ENCODE measurements at regions of chr4 and their contacts with region 1.

Region 1: DNA sequence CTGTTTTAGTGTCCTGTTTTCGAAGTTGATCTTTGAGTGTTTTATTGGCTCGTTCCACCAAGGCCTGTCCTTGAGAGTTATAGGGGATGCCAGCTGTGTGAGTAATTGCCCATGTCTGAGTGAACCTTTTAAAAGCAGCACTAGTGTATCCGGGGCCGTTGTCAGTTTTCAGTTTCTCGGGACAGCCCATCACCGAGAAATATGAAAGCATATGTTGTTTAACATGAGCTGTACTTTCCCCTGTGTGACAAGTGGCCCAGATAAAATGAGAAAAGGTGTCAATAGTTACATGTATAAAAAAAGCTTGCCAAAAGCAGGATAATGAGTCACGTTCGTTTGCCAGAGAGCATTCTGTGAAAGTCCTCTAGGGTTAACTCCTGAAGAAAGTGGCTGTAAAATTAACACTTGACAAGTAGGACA is 48.6 kb upstream of the RASSF6 start:
- DNase-seq: no peak
- ATAC-seq: no peak
- H3K4me3 ChIP-seq: no peak overlapping the region
- H3K27ac ChIP-seq: peak overlapping the region; percentile 68
- H3K4me1 ChIP-seq: no peaks in the 10 kb centered on the region
- H3K27me3 ChIP-seq: no peaks in the 10 kb centered on the region
- CTCF ChIP-seq: no peak

Region 2: GRCh38 chr4:73917081-73917501 is 248.3 kb after region 1 on chr4:
- CTCF ChIA-PET with region 1: interaction called, 16 read pairs
- POLR2A ChIA-PET with region 1: no interaction called
- in situ Hi-C with region 1: no loop called
- intact Hi-C with region 1: loop called (anchors 2 kb)
- DNase-seq: no peak
- ATAC-seq: peak; percentile 85
- H3K4me3 ChIP-seq: no peak overlapping the region
- H3K27ac ChIP-seq: peak overlapping the region; percentile 42
- H3K4me1 ChIP-seq: peaks cover 5% of the 10 kb centered on the region; the same call in 1 of the 2 replicates
- H3K27me3 ChIP-seq: no peaks in the 10 kb centered on the region
- CTCF ChIP-seq: no peak

Region 3: GRCh38 chr4:73944061-73944875 is 275.5 kb after region 1 on chr4:
- CTCF ChIA-PET with region 1: no interaction called
- POLR2A ChIA-PET with region 1: no interaction called
- in situ Hi-C with region 1: no loop called
- intact Hi-C with region 1: no loop called
- DNase-seq: no peak
- ATAC-seq: peak; percentile 12; the same call in 1 of the 2 replicates
- H3K4me3 ChIP-seq: peak overlapping the region in 1 of 2 experiments; percentile 15; a peak in 3 of 4 replicates
- H3K27ac ChIP-seq: no peak overlapping the region
- H3K4me1 ChIP-seq: no peaks in the 10 kb centered on the region
- H3K27me3 ChIP-seq: peaks cover 3% of the 10 kb centered on the region; the same call in 1 of the 2 replicates
- CTCF ChIP-seq: no peak

Region 4: GRCh38 chr4:74944328-74944793 is 1275.6 kb after region 1 on chr4:
- CTCF ChIA-PET with region 1: no interaction called
- POLR2A ChIA-PET with region 1: no interaction called
- in situ Hi-C with region 1: no loop called
- intact Hi-C with region 1: no loop called
- DNase-seq: no peak
- ATAC-seq: no peak
- H3K4me3 ChIP-seq: no peak overlapping the region
- H3K27ac ChIP-seq: no peak overlapping the region
- H3K4me1 ChIP-seq: no peaks in the 10 kb centered on the region
- H3K27me3 ChIP-seq: no peaks in the 10 kb centered on the region
- CTCF ChIP-seq: no peak